ENCODE measurements at regions of chr13 and their contacts with region 1.

Region 1: DNA sequence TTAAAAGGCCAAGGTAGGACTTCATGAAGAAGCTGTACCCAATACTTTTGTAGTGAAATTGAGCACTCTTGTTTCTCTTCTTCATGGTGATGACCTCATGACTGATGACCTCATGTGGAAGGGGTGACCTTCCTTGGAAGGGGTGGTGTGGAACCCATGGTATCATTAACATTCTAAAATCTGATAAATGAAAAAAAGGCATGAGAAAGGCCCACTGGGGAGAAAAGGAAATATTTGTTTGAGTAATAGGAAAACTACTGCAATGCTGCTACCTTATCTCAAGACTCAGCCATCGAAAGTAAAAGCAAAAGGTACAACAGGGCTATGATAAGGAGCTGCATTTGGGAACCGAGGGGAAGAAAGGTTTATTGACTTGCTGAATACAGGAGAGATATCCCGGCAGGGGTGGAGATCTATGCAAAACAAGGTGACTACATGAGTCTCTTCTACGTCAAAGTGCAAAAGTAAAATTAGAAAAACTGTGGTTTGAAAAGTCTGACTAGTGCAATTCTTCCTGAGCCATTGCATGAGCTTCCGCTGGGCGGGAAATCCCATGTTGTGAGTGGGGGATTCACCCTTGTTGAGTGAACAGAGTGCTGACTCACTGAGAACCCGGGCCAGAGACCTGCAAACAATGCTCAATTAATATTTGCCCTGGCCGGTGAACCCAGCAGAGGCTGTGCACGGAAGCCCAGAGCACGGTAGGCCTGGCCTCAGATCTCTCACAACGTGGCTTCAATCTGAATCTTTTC is 138.9 kb upstream of the RFC3 start:
- DNase-seq: peak; percentile 51 to 66 (median 61)
- ATAC-seq: peak in 3 of 4 donors; percentile 44 to 75 (median 67)
- H3K4me3 ChIP-seq: peak overlapping the region in 6 of 12 donors; percentile 7 to 37 (median 22)
- H3K27ac ChIP-seq: peak overlapping the region in 11 of 12 donors; percentile 16 to 73 (median 49)
- H3K4me1 ChIP-seq: peaks cover 0 to 44% (median 18%) of the 10 kb centered on the region in 12 donors
- H3K27me3 ChIP-seq: no peaks in the 10 kb centered on the region
- CTCF ChIP-seq: no peak
- POLR2A ChIP-seq: no peak

Region 2: DNA sequence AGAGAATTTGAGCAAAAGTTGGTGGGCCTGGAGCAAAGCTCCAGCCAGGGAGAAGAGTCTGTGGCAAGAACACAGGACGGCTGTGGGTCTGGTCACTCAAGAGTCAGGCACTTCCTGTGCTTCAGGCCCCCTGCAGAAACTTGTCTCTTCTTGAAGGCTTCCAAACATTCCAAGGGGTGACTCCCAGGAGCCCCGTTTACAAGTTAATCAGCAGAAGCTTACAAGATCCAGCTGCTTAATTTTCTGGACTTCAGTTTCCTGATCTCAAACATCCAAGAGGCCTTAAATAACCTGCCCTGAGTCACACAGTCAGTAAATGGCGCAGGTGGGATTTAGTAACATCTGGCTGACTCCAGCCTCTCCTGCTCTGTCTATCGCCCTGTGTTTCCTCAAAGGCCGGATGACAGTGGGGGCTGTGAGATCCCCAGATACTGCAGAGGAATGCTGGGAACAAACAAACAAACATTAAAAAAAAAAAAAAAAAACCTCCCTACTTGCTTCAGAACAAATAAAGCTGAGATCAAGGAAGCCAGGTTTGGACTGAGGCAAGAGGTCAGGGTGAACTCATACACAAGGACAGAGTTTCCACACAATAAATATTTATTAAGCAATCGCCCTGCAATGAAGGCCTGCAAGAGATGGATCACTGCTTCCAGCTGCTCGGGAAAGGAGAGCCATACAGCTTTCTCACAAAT is 36.6 kb before region 1 on chr13:
- intact Hi-C with region 1: loop called in 2 of 10 experiments (anchors 5 kb)
- DNase-seq: peak in 4 of 5 donors; percentile 54 to 73 (median 58)
- ATAC-seq: peak; percentile 68 to 81 (median 72)
- H3K4me3 ChIP-seq: no peak overlapping the region
- H3K27ac ChIP-seq: peak overlapping the region in 11 of 12 donors; percentile 7 to 78 (median 60)
- H3K4me1 ChIP-seq: peaks cover 0 to 63% (median 36%) of the 10 kb centered on the region in 12 donors
- H3K27me3 ChIP-seq: no peaks in the 10 kb centered on the region
- CTCF ChIP-seq: no peak
- POLR2A ChIP-seq: no peak

Region 3: GRCh38 chr13:33717775-33718174 is 38.7 kb after region 1 on chr13:
- intact Hi-C with region 1: loop called in 5 of 10 experiments (anchors 2 to 10 kb)
- DNase-seq: no peak
- ATAC-seq: no peak
- H3K4me3 ChIP-seq: no peak overlapping the region
- H3K27ac ChIP-seq: peak overlapping the region in 1 of 12 donors; percentile 29
- H3K4me1 ChIP-seq: peaks cover 0 to 20% (median 15%) of the 10 kb centered on the region in 12 donors
- H3K27me3 ChIP-seq: no peaks in the 10 kb centered on the region
- CTCF ChIP-seq: no peak
- POLR2A ChIP-seq: no peak

Measured in heart left ventricle (tissue), 16 donors.